Pancreas (tissue), 10 donors: ENCODE measurements at regions of chr1 and their contacts with region 1.

Region 1: GRCh38 chr1:39116868-39117728 is 87.4 kb upstream of the MACF1 start:
- DNase-seq: peak in 1 of 6 donors; percentile 32
- ATAC-seq: peak; percentile 75 to 85 (median 80)
- H3K4me3 ChIP-seq: no peak overlapping the region
- H3K27ac ChIP-seq: peak overlapping the region in 3 of 4 donors; percentile 0 to 59 (median 50)
- H3K4me1 ChIP-seq: peaks cover 13 to 36% (median 27%) of the 10 kb centered on the region in 3 donors
- H3K27me3 ChIP-seq: no peaks in the 10 kb centered on the region
- CTCF ChIP-seq: no peak

Region 2: DNA sequence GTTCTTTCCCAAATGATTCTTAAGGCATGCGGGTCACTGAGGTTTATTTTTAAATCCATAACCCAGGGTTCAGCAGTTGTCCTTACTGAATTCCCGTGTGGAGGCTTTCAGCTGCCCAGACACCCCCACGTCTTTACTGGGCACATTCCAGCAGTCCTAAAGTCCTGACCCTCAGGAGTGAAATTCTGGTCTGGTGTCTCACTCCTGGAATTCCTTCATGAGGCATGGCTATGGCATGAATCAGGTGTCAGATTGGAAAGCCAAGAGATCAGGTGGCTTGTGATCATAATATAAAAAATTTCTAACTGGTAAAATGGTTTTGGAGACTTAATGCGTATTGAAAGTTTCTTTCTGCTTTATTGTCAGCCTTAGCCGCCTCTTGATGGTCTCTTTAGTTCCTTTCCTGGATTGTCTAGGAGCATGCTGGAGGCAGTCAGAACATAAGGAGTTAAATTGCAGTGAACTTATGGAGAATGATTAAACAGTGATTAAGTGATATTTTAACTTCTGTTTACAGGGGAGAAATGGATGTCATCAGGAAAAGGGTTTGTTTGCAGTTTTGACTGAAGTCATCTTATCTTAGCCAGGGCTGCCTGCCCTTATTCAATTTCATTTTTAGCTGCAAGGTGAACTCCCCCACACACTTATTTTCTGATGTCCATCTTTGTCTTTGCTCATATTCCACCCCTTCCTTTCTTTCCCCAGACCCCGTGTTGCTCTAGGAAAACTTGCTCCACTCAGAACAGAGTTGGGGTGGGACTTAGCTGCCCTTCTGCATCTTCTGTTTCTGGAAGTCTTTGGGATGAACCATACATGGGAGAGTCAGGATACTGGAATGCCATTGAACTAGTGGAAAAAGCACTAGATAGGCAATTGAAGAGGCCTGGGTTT is 61.7 kb after region 1 on chr1:
- intact Hi-C with region 1: loop called in 1 of 3 experiments (anchors 5 kb)
- DNase-seq: peak in 2 of 6 donors; percentile 29 to 44
- ATAC-seq: peak; percentile 61 to 79 (median 71)
- H3K4me3 ChIP-seq: peak overlapping the region in 1 of 4 donors; percentile 1
- H3K27ac ChIP-seq: peak overlapping the region; percentile 24 to 81 (median 42)
- H3K4me1 ChIP-seq: peaks cover 18 to 36% (median 26%) of the 10 kb centered on the region in 3 donors
- H3K27me3 ChIP-seq: no peaks in the 10 kb centered on the region
- CTCF ChIP-seq: no peak